ENCODE measurements at regions of chr2 and their contacts with region 1.

Region 1: GRCh38 chr2:157420771-157421323 is 23.0 kb downstream of the CYTIP start:
- DNase-seq: no peak
- ATAC-seq: peak; percentile 2 to 6
- H3K4me3 Mint-ChIP-seq: peak overlapping the region; percentile 31 to 78 (median 62)
- H3K27ac Mint-ChIP-seq: peak overlapping the region; percentile 88 to 99 (median 93)
- H3K4me1 Mint-ChIP-seq: peaks cover 22 to 85% (median 69%) of the 10 kb centered on the region in 4 donors
- H3K27me3 Mint-ChIP-seq: no peaks in the 10 kb centered on the region

Region 2: GRCh38 chr2:157327621-157328500 is 93.0 kb before region 1 on chr2:
- POLR2A ChIA-PET with region 1: interaction called, 16 read pairs
- DNase-seq: peak; percentile 74 to 92 (median 82)
- ATAC-seq: peak; percentile 88 to 90
- H3K4me3 Mint-ChIP-seq: peak overlapping the region; percentile 51 to 84 (median 70)
- H3K27ac Mint-ChIP-seq: peak overlapping the region; percentile 8 to 96 (median 93)
- H3K4me1 Mint-ChIP-seq: peaks cover 25 to 55% (median 53%) of the 10 kb centered on the region in 4 donors
- H3K27me3 Mint-ChIP-seq: no peaks in the 10 kb centered on the region

Region 3: GRCh38 chr2:157336137-157337010 is 84.5 kb before region 1 on chr2:
- POLR2A ChIA-PET with region 1: interaction called, 13 read pairs
- DNase-seq: peak in 8 of 10 donors; percentile 17 to 68 (median 40)
- ATAC-seq: peak; percentile 34 to 35
- H3K4me3 Mint-ChIP-seq: peak overlapping the region; percentile 33 to 76 (median 64)
- H3K27ac Mint-ChIP-seq: peak overlapping the region; percentile 17 to 91 (median 82)
- H3K4me1 Mint-ChIP-seq: peaks cover 30 to 74% (median 69%) of the 10 kb centered on the region in 4 donors
- H3K27me3 Mint-ChIP-seq: no peaks in the 10 kb centered on the region

Measured in naive thymus-derived CD8-positive, alpha-beta T cell (primary cell).